ENCODE measurements at regions of chr5 and their contacts with region 1.

Region 1: DNA sequence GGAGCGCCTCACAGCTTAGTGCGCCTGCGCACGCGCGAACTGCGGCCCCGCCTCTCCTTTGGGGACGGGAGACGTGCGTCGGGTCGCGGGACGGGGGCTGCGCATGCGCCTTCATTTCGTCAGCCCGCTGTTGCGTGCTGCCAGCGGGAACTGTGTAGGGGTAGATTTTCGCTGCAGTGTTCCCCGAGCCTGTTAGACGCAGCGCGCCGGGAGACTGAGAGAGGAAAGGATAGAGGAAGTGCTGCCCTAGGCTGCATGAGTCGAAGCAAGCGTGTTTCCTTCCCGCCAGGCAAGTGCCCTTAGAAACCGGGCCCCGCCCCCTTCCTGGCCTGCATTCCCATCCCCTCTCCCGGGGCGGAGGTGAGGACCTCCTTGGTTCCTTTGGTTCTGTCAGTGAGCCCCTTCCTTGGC is 12.3 kb downstream of the ITGA1 start:
- DNase-seq: peak; percentile 86 to 97 (median 92)
- ATAC-seq: peak; percentile 88 to 92 (median 90)
- H3K4me3 ChIP-seq: peak overlapping the region; percentile 68 to 99
- H3K4me3 Mint-ChIP-seq: peak overlapping the region; percentile 95 to 99 (median 98)
- H3K27ac ChIP-seq: peak overlapping the region; percentile 75
- H3K27ac Mint-ChIP-seq: peak overlapping the region; percentile 88 to 93
- H3K4me1 ChIP-seq: peaks cover 23 to 45% of the 10 kb centered on the region in 2 experiments
- H3K4me1 Mint-ChIP-seq: peaks cover 62 to 72% (median 70%) of the 10 kb centered on the region in 3 donors
- H3K27me3 ChIP-seq: no peaks in the 10 kb centered on the region
- H3K27me3 Mint-ChIP-seq: no peaks in the 10 kb centered on the region

Region 2: DNA sequence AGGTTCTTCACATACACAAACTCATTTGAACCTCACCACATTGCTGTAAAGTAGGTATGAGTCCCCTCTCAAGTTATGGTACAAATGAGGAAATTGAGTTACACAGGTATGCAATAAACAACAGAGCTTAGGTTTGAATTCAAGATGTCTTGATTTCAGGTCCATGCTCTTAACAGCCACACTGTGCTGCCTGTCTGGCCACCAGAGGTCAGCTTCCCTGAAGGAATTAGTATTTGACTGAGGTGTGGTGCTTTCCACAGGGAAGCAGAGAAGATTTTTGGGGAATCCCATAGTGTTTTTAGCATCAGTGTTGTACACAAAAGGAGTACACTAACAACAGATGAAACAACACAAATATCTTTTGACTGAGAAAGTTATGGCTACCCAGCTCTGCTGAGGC is 106.7 kb before region 1 on chr5:
- CTCF ChIA-PET with region 1: interaction called, 3 to 12 read pairs
- POLR2A ChIA-PET with region 1: no interaction called
- DNase-seq: peak in 25 of 35 experiments; percentile 2 to 58 (median 19)
- ATAC-seq: peak in 2 of 4 experiments; percentile 53 to 63
- H3K4me3 ChIP-seq: no peak overlapping the region
- H3K4me3 Mint-ChIP-seq: no peak overlapping the region
- H3K27ac ChIP-seq: no peak overlapping the region
- H3K27ac Mint-ChIP-seq: no peak overlapping the region
- H3K4me1 ChIP-seq: no peaks in the 10 kb centered on the region
- H3K4me1 Mint-ChIP-seq: peaks cover 7 to 11% (median 7%) of the 10 kb centered on the region in 3 donors
- H3K27me3 ChIP-seq: no peaks in the 10 kb centered on the region
- H3K27me3 Mint-ChIP-seq: no peaks in the 10 kb centered on the region

Region 3: DNA sequence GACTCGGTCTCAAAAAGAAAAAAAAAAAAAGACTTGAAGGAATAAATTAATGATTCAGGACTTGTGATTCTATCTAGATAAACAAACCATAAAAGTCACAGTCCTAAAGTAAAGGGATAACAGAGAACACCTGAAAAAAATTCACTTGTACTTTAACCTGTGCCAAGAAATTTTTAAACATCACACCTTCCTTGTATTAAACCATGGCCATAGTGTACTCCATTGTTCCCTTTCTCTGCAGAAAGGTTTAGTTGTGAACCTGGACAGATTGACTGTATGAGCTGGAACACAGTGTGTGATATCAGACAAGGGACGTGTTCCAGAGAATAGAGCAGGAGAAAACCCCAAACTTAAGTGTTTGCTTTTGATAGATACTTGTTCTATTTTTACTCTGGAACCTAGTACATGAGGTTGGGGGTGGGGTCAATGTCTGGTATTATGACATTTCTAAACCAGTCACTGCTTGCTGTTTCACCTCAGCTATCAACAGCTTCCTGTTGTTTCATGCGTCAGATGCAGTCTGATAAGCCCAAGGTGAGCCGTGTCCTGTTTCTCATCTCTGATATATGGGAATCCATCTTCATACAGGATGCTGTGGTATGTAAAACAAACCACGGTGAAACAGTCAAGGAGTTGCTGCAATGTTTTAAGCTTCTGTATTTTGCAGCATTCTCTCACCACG is 74.8 kb before region 1 on chr5:
- CTCF ChIA-PET with region 1: interaction called in 1 of 2 experiments, 10 read pairs
- POLR2A ChIA-PET with region 1: interaction called, 4 to 5 read pairs
- DNase-seq: peak; percentile 23 to 89 (median 73)
- ATAC-seq: peak; percentile 98 to 99 (median 99)
- H3K4me3 ChIP-seq: no peak overlapping the region
- H3K4me3 Mint-ChIP-seq: peak overlapping the region; percentile 54 to 68 (median 62)
- H3K27ac ChIP-seq: peak overlapping the region; percentile 80
- H3K27ac Mint-ChIP-seq: peak overlapping the region; percentile 91 to 96
- H3K4me1 ChIP-seq: peaks cover 28 to 46% of the 10 kb centered on the region in 2 experiments
- H3K4me1 Mint-ChIP-seq: peaks cover 67 to 72% (median 70%) of the 10 kb centered on the region in 3 donors
- H3K27me3 ChIP-seq: no peaks in the 10 kb centered on the region
- H3K27me3 Mint-ChIP-seq: no peaks in the 10 kb centered on the region

Region 4: DNA sequence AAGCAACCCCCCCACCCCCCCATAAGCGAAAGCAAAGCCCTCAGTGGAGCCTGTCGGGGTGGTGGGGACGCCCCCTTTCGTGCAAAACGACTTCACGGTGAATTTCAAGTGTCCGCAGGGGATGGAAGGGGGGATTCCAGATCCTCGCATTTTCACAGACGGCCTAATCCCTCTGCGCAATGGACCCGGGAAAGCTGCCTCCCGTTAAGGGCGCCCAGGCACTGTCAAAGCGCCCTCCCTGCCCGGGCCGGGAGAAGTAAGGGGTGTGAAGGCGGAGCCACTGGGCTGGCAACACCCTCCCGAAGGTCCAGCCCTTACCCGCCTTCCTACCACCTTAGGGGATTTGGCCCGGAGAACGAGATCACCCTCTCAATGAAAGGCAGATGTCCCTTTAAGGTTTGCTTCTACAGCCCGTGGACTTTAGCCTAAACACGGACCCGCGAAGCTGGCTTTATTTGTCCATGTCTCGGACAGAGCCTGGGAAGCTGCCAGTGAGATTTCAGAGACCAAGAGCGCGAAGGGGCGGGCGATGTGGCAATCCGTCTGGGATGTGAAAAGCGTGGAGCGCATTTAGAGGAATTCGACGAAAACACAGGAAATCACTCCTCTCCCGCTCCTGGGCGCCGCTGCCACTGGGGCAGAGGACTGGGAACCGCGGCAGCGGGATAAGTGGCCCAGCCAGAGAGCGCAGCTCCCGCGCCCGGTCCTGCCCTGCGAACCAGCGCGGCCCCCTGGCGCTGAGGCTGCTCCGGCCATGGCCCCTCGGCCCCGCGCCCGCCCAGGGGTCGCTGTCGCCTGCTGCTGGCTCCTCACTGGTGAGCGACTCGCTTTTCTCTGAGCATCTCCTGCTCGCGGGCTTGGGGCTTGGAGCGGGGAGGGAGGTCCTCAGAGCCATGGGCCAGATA is 12.1 kb before region 1 on chr5 and contains the starts of genes ITGA1 and PELO:
- CTCF ChIA-PET with region 1: interaction called, 10 to 13 read pairs
- POLR2A ChIA-PET with region 1: interaction called, 3 to 4 read pairs
- DNase-seq: peak in 27 of 35 experiments; percentile 1 to 73 (median 22)
- ATAC-seq: peak; percentile 67 to 79 (median 74)
- H3K4me3 ChIP-seq: peak within 1 kb of the TSS; percentile 74 to 96
- H3K4me3 Mint-ChIP-seq: peak within 1 kb of the TSS; percentile 85 to 93 (median 87)
- H3K27ac ChIP-seq: peak within 1 kb of the TSS; percentile 46
- H3K27ac Mint-ChIP-seq: peak within 1 kb of the TSS; percentile 71 to 81
- H3K4me1 ChIP-seq: peaks cover 14 to 17% of the 10 kb centered on the region in 2 experiments
- H3K4me1 Mint-ChIP-seq: peaks cover 19 to 40% (median 26%) of the 10 kb centered on the region in 3 donors
- H3K27me3 ChIP-seq: peaks cover 0 to 9% of the 10 kb centered on the region in 2 experiments
- H3K27me3 Mint-ChIP-seq: peaks cover 0 to 10% of the 10 kb centered on the region in 2 donors
- total RNA-seq, gene ITGA1: 2.9 to 13.0 (median 6.8) TPM
- total RNA-seq, gene PELO: 7.3 to 18.2 (median 13.8) TPM

Region 5: GRCh38 chr5:52915176-52915875 is 115.3 kb after region 1 on chr5:
- CTCF ChIA-PET with region 1: interaction called, 5 to 10 read pairs
- POLR2A ChIA-PET with region 1: no interaction called
- DNase-seq: peak in 31 of 35 experiments; percentile 4 to 80 (median 24)
- ATAC-seq: peak; percentile 75 to 92 (median 86)
- H3K4me3 ChIP-seq: no peak overlapping the region
- H3K4me3 Mint-ChIP-seq: peak overlapping the region; percentile 23 to 61 (median 45)
- H3K27ac ChIP-seq: no peak overlapping the region
- H3K27ac Mint-ChIP-seq: no peak overlapping the region
- H3K4me1 ChIP-seq: peaks cover 0 to 4% of the 10 kb centered on the region in 2 experiments
- H3K4me1 Mint-ChIP-seq: peaks cover 5 to 7% (median 7%) of the 10 kb centered on the region in 3 donors
- H3K27me3 ChIP-seq: no peaks in the 10 kb centered on the region
- H3K27me3 Mint-ChIP-seq: no peaks in the 10 kb centered on the region

Measured in T-cell (primary cell).